Activated CD4-positive, alpha-beta T cell treated with anti-CD3 and anti-CD28 coated beads for 36 hours (primary cell): ENCODE measurements at regions of chr9 and their contacts with region 1.

Region 1: DNA sequence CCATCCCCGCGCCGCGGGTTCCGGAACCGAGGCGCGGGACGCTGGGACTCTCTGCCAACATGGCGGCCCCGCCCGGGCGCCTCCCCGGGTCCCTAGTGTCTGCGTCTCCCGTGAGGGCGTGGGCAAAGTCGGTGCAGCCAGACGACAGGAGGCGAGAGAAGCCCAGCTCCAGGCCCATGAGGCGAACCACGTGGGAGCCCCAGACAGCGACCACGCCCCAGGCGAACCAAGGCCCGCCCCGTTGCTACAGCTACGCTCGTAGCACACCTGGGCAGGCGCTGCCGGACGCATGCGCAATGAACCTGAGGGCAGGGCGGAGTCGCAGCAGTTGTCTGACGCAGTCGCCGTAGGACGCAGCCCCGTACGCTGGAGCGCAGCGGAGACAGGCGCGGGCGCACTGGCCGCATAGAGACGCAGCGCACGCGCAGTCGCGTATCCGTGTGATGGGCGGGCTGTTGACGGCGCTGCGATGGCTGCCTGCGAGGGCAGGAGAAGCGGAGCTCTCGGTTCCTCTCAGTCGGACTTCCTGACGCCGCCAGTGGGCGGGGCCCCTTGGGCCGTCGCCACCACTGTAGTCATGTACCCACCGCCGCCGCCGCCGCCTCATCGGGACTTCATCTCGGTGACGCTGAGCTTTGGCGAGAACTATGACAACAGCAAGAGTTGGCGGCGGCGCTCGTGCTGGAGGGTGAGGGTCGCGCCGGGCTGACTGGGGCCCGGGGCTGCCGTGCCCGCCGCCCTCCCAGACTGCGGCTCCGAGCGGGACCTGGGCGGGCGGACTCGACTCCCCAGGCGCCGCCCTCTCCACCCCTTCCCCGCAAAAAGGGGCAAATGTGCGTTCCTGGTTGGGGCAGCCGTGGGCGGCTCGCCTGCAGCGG is at the start of gene MAN1B1:
- DNase-seq: peak; percentile 100
- ATAC-seq: peak; percentile 85
- H3K4me3 Mint-ChIP-seq: peak within 1 kb of the TSS; percentile 88
- H3K27ac Mint-ChIP-seq: peak within 1 kb of the TSS; percentile 96
- H3K4me1 Mint-ChIP-seq: peaks cover 46% of the 10 kb centered on the region
- H3K27me3 Mint-ChIP-seq: no peaks in the 10 kb centered on the region
- total RNA-seq, gene MAN1B1: 21.6 to 26.7 TPM

Region 2: GRCh38 chr9:136944519-136945279 is 142.1 kb before region 1 on chr9 and contains the starts of genes C8G and FBXW5:
- CTCF ChIA-PET with region 1: no interaction called
- POLR2A ChIA-PET with region 1: no interaction called
- intact Hi-C with region 1: loop called in 1 of 2 experiments (anchors 1 kb)
- DNase-seq: peak; percentile 97
- ATAC-seq: peak; percentile 84
- H3K4me3 Mint-ChIP-seq: peak within 1 kb of the TSS; percentile 77
- H3K27ac Mint-ChIP-seq: peak within 1 kb of the TSS; percentile 88
- H3K4me1 Mint-ChIP-seq: peaks cover 9% of the 10 kb centered on the region
- H3K27me3 Mint-ChIP-seq: no peaks in the 10 kb centered on the region
- total RNA-seq, gene C8G: 0.77 TPM in 1 of 2 experiments, not detected in the other
- total RNA-seq, gene FBXW5: 54.4 to 66.4 TPM

Region 3: DNA sequence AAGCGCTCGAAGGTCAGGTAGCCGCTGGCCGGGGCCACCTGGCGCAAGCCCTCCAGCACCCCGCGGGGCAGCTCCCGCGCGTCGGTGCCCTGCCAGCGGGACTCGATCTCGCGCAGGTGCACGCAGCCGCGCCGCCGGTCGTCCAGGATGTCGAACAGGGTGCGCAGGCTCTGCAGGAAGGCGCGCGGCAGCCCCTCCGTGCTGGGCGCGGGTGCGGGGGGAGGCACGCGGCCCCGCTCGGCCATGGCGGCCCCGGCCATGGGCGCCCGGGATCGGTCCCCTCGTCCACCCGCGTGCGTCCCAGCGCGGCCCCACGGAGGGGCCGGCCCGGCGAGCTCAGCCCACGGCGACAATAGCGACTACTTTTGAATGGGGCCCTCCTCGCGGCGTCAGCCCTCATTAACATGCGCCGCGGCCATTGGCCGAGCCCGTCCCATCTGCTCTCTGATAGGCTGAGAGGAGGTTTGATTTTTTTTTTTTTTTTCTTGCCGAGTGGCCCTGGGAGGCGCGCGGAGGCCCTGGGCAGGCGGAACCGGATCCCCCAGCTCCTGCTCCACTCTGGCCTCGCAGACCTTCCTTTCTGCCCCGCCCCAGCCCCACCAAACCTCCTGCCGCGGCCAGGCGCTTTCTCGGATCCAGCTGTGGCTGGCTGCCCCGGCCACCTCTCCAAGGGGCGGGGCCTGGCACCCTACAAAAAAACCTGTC is 16.4 kb before region 1 on chr9 and contains the start of gene SAPCD2:
- CTCF ChIA-PET with region 1: interaction called, 15 read pairs
- POLR2A ChIA-PET with region 1: interaction called, 11 read pairs
- intact Hi-C with region 1: loop called (anchors 1 to 2 kb)
- DNase-seq: peak; percentile 92
- ATAC-seq: peak; percentile 91
- H3K4me3 Mint-ChIP-seq: peak within 1 kb of the TSS; percentile 71
- H3K27ac Mint-ChIP-seq: peak within 1 kb of the TSS; percentile 71
- H3K4me1 Mint-ChIP-seq: peaks cover 9% of the 10 kb centered on the region
- H3K27me3 Mint-ChIP-seq: no peaks in the 10 kb centered on the region
- total RNA-seq, gene SAPCD2: 6.4 to 8.8 TPM

Region 4: GRCh38 chr9:137129456-137130175 is 42.8 kb after region 1 on chr9:
- CTCF ChIA-PET with region 1: interaction called, 4 read pairs
- POLR2A ChIA-PET with region 1: interaction called, 3 read pairs
- intact Hi-C with region 1: loop called in 1 of 2 experiments (anchors 5 kb)
- DNase-seq: peak; percentile 95
- ATAC-seq: peak; percentile 96
- H3K4me3 Mint-ChIP-seq: peak overlapping the region; percentile 89
- H3K27ac Mint-ChIP-seq: peak overlapping the region; percentile 70
- H3K4me1 Mint-ChIP-seq: peaks cover 21% of the 10 kb centered on the region
- H3K27me3 Mint-ChIP-seq: peaks cover 5% of the 10 kb centered on the region

Region 5: DNA sequence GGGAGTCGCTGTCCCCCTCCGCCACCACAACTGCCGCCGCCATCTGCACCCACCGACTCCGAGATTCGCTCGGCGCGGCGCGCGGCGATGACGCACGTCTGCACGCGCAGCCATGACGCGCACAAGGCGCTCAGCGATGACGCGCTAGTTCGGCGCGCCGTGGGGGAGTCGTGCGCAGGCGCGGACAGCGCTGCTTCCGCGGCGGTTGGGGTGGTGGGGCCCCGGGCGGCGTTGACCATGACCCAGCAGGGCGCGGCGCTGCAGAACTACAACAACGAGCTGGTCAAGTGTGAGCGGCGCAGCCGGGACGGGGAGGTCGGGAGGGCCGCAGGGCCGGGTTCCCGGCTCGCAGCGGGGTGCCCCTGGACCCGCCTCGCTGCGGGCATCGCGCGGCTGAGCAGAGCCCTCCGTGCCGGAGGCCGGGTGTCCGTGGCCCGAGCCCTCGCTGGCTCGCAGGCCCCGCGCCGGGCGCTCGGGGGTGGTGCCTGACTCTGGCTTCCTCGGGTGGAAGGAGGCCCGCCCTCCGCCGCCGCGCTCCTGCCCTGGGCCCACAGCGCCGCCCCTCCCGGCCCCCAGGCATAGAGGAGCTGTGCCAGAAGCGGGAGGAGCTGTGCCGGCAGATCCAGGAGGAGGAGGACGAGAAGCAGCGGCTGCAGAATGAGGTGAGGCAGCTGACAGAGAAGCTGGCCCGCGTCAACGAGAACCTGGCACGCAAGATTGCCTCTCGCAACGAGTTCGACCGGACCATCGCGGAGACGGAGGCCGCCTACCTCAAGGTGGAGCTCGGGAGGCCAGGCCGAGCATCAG is 101.9 kb after region 1 on chr9 and contains the starts of genes ANAPC2 and SSNA1:
- CTCF ChIA-PET with region 1: no interaction called
- POLR2A ChIA-PET with region 1: no interaction called
- intact Hi-C with region 1: loop called in 1 of 2 experiments (anchors 1 kb)
- DNase-seq: peak; percentile 96
- ATAC-seq: peak; percentile 85
- H3K4me3 Mint-ChIP-seq: peak within 1 kb of the TSS; percentile 91
- H3K27ac Mint-ChIP-seq: peak within 1 kb of the TSS; percentile 88
- H3K4me1 Mint-ChIP-seq: peaks cover 33% of the 10 kb centered on the region
- H3K27me3 Mint-ChIP-seq: no peaks in the 10 kb centered on the region
- total RNA-seq, gene ANAPC2: 30.8 to 38.4 TPM
- total RNA-seq, gene SSNA1: 53.6 to 58.6 TPM

Region 6: GRCh38 chr9:137459147-137459600 is 372.4 kb after region 1 on chr9 and contains the start of gene NSMF:
- CTCF ChIA-PET with region 1: no interaction called
- POLR2A ChIA-PET with region 1: no interaction called
- intact Hi-C with region 1: loop called in 1 of 2 experiments (anchors 2 kb)
- DNase-seq: peak; percentile 98
- ATAC-seq: peak; percentile 66
- H3K4me3 Mint-ChIP-seq: peak within 1 kb of the TSS; percentile 39
- H3K27ac Mint-ChIP-seq: peak within 1 kb of the TSS; percentile 78
- H3K4me1 Mint-ChIP-seq: peaks cover 33% of the 10 kb centered on the region
- H3K27me3 Mint-ChIP-seq: no peaks in the 10 kb centered on the region
- total RNA-seq, gene NSMF: 63.6 to 65.0 TPM